HEK293 (cell line): ENCODE measurements at regions of chr14 and their contacts with region 1.

Region 1: DNA sequence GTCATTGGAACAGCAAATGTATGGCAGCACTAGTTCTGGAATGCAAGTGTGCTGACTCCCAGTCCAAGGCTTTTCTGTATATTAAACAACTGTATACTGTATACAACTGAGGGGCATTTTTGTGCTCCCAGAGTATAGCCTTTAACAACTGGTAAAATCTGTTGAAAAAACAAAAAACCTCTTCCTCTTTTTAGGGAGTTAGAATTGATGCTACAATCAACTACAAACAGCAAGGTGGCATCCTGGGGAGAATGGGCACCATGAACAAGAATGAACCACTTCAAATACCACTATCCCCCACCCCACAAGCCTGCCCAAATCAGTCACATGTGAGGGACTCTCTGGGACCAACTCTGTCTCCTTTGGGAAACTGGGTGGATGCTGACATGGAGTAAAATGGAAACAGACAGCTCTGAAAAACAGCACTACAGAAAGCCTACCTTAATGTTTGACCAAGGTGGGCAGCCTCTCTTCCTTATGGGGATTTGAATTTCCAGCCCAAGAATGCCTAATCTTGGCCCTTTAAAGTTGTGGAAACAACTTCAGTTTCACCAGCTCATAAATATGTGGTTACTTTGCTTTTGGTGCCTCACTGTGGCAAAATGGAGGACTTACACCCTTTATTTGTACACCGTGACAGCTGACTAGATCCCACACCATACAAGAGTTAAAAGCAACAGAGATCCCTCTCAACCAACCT is 7.5 kb downstream of the VTI1B start:
- H3K4me3 ChIP-seq: no peak overlapping the region
- H3K27ac ChIP-seq: no peak overlapping the region
- H3K4me1 ChIP-seq: peaks cover 5% of the 10 kb centered on the region; the same call in 1 of the 2 replicates
- CTCF ChIP-seq: peak; percentile 11; the same call in 1 of the 2 replicates

Region 2: DNA sequence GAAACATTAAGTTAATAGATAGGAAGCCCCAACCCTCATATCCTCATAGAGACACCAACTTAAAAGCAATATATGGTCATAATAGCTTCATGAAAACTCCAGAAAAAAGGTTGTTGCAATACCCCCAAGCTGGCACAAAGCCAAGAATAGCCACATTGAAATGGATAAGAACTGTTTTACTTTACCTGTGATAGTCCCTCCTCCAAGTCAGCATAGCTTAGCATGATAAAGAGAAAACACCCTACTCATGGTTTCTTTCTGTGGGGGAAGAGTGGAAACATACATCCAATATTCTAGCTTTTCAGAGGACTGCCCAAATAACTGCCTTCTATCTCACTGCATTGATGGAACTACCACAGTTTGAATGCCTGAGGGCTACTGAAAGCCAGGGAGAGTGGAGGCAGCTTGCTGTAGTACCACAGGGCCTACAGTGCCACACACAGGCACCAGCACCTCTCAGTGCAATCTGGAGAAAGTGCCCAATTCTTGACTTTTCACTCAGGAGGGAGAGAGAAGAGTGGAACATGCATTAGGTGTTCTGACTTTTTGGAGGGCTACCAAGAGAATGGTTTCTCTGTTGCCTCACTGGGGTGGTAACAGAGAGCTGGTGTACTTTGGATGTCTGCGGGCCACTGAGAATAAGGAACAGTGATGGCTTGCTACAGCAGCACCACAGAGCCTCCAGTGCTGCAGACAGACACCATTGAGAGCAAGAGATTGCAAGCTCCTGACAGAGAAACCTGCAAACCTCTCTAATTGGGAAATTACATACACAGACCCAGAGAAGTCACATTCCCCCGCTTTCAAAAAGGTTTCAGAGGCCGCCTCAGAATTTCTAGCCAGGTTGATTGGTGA is 634.8 kb before region 1 on chr14:
- CTCF ChIA-PET with region 1: no interaction called
- POLR2A ChIA-PET with region 1: no interaction called
- H3K4me3 ChIP-seq: no peak overlapping the region
- H3K27ac ChIP-seq: no peak overlapping the region
- H3K4me1 ChIP-seq: no peaks in the 10 kb centered on the region
- CTCF ChIP-seq: no peak

Region 3: GRCh38 chr14:67583711-67584644 is 82.9 kb before region 1 on chr14:
- CTCF ChIA-PET with region 1: interaction called, 29 read pairs
- POLR2A ChIA-PET with region 1: interaction called, 4 read pairs
- H3K4me3 ChIP-seq: no peak overlapping the region
- H3K27ac ChIP-seq: no peak overlapping the region
- H3K4me1 ChIP-seq: no peaks in the 10 kb centered on the region
- CTCF ChIP-seq: peak; percentile 77

Region 4: GRCh38 chr14:67619446-67620216 is 47.3 kb before region 1 on chr14 and contains the start of gene ARG2:
- CTCF ChIA-PET with region 1: interaction called, 33 read pairs
- POLR2A ChIA-PET with region 1: interaction called, 3 read pairs
- H3K4me3 ChIP-seq: peak within 1 kb of the TSS; percentile 80
- H3K27ac ChIP-seq: peak within 1 kb of the TSS; percentile 38; the same call in 1 of the 2 replicates
- H3K4me1 ChIP-seq: peaks cover 13% of the 10 kb centered on the region
- CTCF ChIP-seq: peak; percentile 56; the same call in 1 of the 2 replicates

Region 5: DNA sequence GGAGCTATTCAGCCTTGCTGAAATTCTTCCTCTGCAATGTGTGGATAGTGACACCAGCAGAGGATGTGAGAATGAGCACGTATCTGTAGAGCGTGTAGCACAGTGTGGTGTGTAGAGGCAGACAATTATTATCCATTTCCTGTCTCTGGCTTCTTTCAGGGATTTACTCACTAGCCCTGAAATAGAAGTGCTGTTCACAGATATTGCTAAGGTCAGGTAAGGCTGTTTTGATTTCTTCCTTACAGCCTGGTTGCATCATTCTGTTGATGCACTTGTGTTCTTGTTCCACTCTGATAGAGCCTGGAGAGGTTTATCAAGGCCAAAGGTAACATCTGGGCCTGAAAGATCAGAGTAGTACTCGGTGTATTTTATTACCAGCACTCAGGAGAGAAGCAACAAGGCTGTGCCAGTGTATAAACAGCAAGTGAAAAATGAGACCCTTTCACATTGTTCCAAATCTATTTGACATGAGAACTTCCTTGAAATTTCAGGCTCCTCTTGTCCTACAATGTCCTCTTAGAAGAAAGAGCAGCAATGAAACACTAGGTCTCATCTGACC is 30.5 kb before region 1 on chr14:
- CTCF ChIA-PET with region 1: no interaction called
- POLR2A ChIA-PET with region 1: no interaction called
- H3K4me3 ChIP-seq: no peak overlapping the region
- H3K27ac ChIP-seq: no peak overlapping the region
- H3K4me1 ChIP-seq: no peaks in the 10 kb centered on the region
- CTCF ChIP-seq: no peak

Region 6: GRCh38 chr14:67650694-67651093 is 16.2 kb before region 1 on chr14:
- CTCF ChIA-PET with region 1: interaction called, 11 read pairs
- POLR2A ChIA-PET with region 1: no interaction called
- H3K4me3 ChIP-seq: no peak overlapping the region
- H3K27ac ChIP-seq: no peak overlapping the region
- H3K4me1 ChIP-seq: no peaks in the 10 kb centered on the region
- CTCF ChIP-seq: no peak

Region 7: DNA sequence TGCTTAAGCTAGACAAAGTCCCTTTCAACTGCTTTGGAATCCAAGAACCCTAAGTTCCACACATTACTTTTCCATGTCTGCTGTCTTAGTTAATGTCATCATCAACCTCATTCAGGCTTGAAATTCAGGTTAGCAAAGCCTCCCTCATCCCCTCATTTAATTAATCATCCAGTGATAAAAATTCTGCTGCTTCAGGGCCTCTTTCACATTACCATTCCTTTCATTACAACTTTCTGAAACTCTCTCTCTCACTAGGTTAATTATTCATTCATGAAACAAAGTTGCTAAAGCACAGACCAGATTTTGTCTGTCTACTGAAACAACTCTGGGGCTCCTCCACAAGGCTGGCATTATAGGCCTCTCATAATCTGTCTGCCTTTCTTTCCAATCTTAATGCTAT is 16.9 kb after region 1 on chr14:
- CTCF ChIA-PET with region 1: no interaction called
- POLR2A ChIA-PET with region 1: no interaction called
- H3K4me3 ChIP-seq: no peak overlapping the region
- H3K27ac ChIP-seq: no peak overlapping the region
- H3K4me1 ChIP-seq: no peaks in the 10 kb centered on the region
- CTCF ChIP-seq: no peak